CD4-positive, alpha-beta memory T cell (primary cell): ENCODE measurements at regions of chr5 and their contacts with region 1.

Region 1: DNA sequence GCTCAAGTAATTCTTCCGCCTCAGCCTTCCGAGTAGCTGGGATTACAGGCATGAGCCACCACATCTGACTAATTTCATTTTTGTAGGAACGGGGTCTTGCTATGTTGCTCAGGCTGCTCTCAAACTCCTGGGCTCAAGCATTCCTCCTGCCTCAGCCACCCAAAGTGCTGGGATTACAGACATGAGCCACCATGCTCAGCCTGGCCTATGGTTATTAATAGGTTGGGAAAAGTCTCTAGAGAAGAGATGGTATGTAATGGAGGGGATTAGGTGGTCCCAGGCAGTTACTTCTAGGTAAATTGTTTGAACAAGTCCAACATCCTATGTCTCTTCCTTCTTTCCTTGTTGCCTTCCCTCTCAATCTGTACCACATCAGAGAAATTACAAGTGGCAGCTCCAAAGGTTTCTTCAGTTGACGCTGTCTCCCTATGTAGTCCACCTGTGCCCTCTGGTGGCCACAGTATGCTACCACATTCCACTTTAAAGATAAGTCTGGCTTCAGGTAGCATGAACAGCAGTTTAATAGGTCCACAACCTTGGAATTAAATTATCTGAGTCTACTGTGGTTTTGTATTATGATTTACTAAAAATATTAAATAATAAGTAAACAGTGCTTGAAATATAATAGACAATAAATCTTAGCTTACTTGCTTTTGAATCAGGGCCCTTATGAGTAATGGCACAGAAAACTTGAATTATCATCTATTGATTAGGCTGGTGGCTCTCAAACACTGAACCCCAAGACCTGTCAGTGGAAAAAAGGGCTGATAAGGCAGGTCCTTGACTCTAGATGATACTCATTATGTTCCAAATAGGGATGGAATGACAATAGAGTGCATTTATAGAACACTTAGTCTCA is 9.7 kb downstream of the TIGD6 start:
- DNase-seq: peak; percentile 56 to 65 (median 60)
- H3K4me3 ChIP-seq: no peak overlapping the region
- H3K4me3 Mint-ChIP-seq: no peak overlapping the region
- H3K27ac ChIP-seq: no peak overlapping the region
- H3K27ac Mint-ChIP-seq: no peak overlapping the region
- H3K4me1 ChIP-seq: no peaks in the 10 kb centered on the region
- H3K4me1 Mint-ChIP-seq: peaks cover 0 to 2% (median under 1%) of the 10 kb centered on the region in 4 donors
- H3K27me3 ChIP-seq: no peaks in the 10 kb centered on the region
- H3K27me3 Mint-ChIP-seq: no peaks in the 10 kb centered on the region

Region 2: DNA sequence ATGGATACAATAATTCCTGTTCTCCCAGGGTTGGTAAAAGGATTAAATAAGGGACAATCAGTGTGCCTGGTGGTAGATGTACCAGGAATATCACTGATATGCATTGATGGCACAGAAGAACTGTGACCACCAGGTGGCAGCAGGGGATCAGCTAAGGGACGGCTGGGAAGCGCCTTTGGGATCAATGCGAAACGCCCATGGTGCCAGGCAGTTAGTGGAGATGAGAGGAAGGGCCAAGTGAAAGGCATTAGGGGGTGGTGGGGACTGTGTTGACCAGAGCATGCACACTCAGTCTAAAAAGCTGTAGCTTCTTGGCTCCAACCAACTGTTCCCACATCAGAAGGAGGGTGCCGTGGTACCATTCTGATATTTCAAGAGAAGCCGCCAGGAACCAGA is 353.9 kb before region 1 on chr5:
- CTCF ChIA-PET with region 1: interaction called, 29 read pairs
- POLR2A ChIA-PET with region 1: no interaction called
- intact Hi-C with region 1: loop called (anchors 1 kb)
- DNase-seq: peak; percentile 39 to 65 (median 52)
- H3K4me3 ChIP-seq: no peak overlapping the region
- H3K4me3 Mint-ChIP-seq: no peak overlapping the region
- H3K27ac ChIP-seq: no peak overlapping the region
- H3K27ac Mint-ChIP-seq: no peak overlapping the region
- H3K4me1 ChIP-seq: no peaks in the 10 kb centered on the region
- H3K4me1 Mint-ChIP-seq: peaks cover 0 to 4% (median 1%) of the 10 kb centered on the region in 4 donors
- H3K27me3 ChIP-seq: peaks cover 5% of the 10 kb centered on the region
- H3K27me3 Mint-ChIP-seq: peaks cover 0 to under 1% of the 10 kb centered on the region in 2 donors

Region 3: DNA sequence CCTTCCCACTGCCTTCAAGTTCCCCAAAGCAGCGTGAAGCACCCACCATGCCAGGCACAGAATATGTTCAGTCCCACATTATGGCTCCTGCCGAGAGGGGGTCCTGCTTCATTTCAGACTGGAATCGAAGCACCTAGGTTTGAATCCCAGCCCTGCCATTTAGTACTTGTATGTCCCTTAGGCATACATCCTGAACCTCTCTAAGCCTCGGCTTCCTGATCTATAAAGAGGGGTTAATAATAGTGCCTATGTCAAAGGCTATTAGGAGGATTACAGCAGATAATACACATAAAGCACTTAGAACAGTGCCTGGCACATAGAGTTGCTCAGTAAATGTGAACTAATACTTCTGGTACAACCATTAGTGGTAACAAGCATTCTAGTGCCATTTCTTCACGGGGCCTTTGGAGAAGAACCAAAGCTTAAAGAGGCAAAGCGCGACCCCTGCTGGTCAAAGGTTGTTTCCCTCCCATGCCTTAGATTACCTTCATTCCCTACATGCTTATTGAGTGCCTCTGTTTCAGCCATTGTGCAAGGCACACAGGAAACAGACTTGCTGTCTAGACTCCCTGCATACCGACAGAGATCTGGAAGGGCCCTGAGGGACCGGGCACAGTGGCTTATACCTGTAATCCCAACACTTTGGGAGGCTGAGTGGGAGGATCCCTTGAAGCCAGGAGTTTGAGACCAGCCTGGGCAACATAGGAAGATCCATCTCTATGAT is 162.4 kb before region 1 on chr5:
- CTCF ChIA-PET with region 1: interaction called, 167 read pairs
- POLR2A ChIA-PET with region 1: no interaction called
- intact Hi-C with region 1: no loop called
- DNase-seq: peak; percentile 65 to 73 (median 67)
- H3K4me3 ChIP-seq: no peak overlapping the region
- H3K4me3 Mint-ChIP-seq: no peak overlapping the region
- H3K27ac ChIP-seq: no peak overlapping the region
- H3K27ac Mint-ChIP-seq: peak overlapping the region in 1 of 7 donors; percentile 54
- H3K4me1 ChIP-seq: no peaks in the 10 kb centered on the region
- H3K4me1 Mint-ChIP-seq: peaks cover 0 to 4% (median 2%) of the 10 kb centered on the region in 4 donors
- H3K27me3 ChIP-seq: no peaks in the 10 kb centered on the region
- H3K27me3 Mint-ChIP-seq: no peaks in the 10 kb centered on the region

Region 4: DNA sequence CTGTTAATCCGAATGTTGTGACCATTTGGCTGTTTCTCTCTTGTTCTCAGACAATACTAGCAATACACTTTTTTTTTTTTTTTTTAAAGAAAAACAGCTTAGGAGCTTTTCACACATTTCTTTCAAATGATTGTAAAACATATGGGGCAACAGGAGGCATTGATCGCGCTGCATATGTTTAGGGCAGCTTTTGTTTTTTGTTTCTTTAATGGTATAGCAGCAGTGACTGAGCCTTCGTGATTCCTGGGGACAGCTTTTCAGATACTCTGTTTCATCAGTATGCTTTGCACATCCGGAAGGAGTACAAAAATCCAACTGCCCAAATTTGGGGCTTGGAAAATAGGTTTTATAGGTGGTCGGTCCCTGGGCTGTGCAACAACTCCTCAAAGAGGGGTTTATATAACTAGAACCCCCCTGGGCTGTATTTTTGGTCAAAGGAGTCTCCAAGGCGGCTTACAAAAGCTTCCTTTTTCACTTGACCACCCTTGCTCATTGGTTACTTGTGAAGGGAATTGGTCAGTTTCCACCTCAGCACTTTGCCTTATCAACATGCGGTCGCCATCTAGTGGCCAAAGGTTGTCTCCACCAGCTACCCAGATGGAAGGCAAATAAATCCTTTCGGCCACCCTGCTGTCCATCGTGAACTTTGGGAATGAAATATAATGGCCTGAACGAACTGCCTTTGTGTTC is 138.0 kb before region 1 on chr5:
- CTCF ChIA-PET with region 1: interaction called, 20 read pairs
- POLR2A ChIA-PET with region 1: no interaction called
- intact Hi-C with region 1: no loop called
- DNase-seq: peak in 3 of 5 donors; percentile 10 to 19 (median 12)
- H3K4me3 ChIP-seq: no peak overlapping the region
- H3K4me3 Mint-ChIP-seq: no peak overlapping the region
- H3K27ac ChIP-seq: no peak overlapping the region
- H3K27ac Mint-ChIP-seq: no peak overlapping the region
- H3K4me1 ChIP-seq: no peaks in the 10 kb centered on the region
- H3K4me1 Mint-ChIP-seq: no peaks in the 10 kb centered on the region
- H3K27me3 ChIP-seq: no peaks in the 10 kb centered on the region
- H3K27me3 Mint-ChIP-seq: no peaks in the 10 kb centered on the region

Region 5: DNA sequence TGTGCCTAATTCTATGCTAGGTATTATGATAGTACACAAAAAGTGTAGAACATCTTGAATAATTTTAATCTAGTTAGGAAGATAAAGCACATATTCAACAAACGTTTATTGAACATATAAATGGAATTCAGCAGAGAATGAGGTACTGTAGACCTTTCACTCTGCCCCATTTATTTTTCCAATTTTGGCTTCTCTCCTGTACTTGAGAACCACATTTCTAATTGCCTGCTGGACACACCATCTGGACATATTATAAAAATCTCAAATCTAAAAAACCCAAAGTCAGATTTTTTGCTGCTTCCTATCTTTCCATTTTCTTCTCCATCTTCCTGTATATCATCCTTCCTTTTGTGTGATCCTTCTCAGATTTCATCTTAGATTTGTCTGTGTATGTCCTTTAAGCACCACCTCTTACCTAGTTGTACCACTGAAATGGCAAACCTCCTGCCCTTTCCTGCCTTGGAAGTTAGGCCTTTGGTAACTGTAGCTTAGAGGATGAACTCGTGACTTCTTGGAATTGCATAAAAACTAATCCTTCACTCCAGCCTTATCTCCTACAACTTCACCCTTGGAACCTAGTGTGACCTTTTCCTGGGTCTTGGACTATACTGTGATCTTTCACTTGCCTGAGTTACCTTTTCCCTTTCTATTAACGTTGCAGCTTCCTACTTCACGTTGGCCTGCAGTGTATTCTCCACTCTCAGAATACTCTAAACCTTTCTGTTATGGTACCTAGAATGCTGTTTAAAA is 21.4 kb before region 1 on chr5:
- CTCF ChIA-PET with region 1: interaction called, 11 read pairs
- POLR2A ChIA-PET with region 1: no interaction called
- intact Hi-C with region 1: no loop called
- DNase-seq: no peak
- H3K4me3 ChIP-seq: no peak overlapping the region
- H3K4me3 Mint-ChIP-seq: no peak overlapping the region
- H3K27ac ChIP-seq: no peak overlapping the region
- H3K27ac Mint-ChIP-seq: peak overlapping the region in 1 of 7 donors; percentile 59
- H3K4me1 ChIP-seq: no peaks in the 10 kb centered on the region
- H3K4me1 Mint-ChIP-seq: peaks cover 0 to 17% (median 12%) of the 10 kb centered on the region in 4 donors
- H3K27me3 ChIP-seq: no peaks in the 10 kb centered on the region
- H3K27me3 Mint-ChIP-seq: no peaks in the 10 kb centered on the region

Region 6: DNA sequence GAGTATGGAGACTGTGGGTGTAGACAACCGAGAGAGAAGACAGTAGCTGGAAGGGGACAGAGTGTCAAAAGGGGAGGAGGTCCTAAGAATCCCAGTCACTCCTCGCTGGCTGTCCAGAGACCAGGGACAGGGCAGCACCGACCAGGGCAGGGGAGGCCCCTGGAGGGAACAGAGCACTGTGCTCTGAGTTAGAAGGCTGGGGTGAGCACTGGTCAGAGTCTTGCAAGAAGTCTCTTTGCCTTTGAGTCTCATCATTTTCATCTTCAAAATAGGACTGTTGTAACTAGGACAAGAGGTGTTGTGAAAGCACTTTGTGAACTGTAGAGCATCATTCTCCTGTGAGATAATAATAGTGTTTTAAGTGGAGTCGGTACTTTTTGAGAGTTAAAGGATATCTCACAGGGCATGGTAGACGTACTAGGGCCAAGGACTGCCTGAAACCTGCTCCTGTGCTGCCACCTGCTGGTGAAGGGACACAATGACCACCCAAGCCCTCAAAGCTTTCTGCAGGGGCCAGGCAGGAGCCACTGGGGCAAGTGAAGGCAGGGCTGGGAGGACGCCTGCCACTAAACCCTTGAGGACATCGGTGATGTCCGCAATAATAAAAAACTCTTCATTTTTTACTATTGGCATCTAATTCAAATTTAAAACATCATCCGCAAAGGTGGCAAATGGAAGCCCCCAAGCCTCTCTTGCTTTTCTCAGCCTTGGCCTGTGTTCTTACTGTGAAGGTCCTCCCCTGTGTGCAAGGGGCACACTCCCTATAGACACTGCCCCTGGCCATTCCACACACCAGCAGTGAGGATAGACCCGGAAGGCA is 227.3 kb after region 1 on chr5:
- CTCF ChIA-PET with region 1: no interaction called
- POLR2A ChIA-PET with region 1: no interaction called
- intact Hi-C with region 1: loop called (anchors 2 kb)
- DNase-seq: peak; percentile 67 to 73 (median 71)
- H3K4me3 ChIP-seq: no peak overlapping the region
- H3K4me3 Mint-ChIP-seq: no peak overlapping the region
- H3K27ac ChIP-seq: no peak overlapping the region
- H3K27ac Mint-ChIP-seq: no peak overlapping the region
- H3K4me1 ChIP-seq: no peaks in the 10 kb centered on the region
- H3K4me1 Mint-ChIP-seq: peaks cover 0 to 5% (median under 1%) of the 10 kb centered on the region in 4 donors
- H3K27me3 ChIP-seq: no peaks in the 10 kb centered on the region
- H3K27me3 Mint-ChIP-seq: peaks cover 0 to 4% of the 10 kb centered on the region in 2 donors